PC-9 (cell line): ENCODE measurements at regions of chr6 and their contacts with region 1.

Region 1: DNA sequence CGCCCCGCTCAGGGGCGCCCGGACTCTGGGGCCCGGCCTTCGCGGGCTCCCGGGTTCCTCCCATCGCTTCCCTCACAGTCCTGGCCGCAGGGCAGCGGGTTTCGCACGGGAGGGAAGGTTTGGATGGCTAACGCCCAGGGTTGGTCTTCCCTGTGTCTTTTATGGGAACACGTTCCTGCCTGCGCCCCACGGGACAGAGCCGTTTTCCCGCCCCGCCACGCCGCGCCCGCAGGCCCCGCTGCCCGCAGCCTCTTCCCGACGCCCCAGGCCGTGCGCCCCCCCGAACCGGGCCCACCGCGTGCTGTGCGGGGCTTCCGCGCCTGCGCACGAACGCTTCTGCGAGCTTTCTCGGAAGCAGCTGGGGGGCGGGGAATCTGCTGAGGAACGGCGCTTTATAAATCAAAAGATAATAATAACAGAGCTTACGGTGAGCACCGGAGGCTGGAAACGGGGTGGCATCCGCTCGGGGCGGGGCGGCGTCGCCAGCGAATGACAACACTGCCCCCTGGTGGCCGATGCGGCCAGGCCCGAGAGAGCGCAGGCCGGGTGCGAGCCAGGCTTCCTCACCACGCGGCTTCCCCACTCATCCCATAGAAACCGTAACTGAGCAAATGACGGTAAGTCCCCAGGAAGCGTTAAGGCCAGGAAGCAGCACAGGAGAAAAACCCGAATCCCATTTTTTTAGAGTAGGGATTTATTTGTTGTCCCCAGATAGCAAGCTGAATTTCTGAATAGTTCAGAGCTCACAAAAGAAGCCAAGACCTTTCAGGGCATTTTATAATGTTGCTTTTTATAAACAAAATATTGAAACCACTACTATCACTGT is 116.4 kb downstream of the MYLK4 start:
- DNase-seq: peak; percentile 37 to 83
- H3K4me3 ChIP-seq: peak overlapping the region; percentile 33; the same call in 1 of the 2 replicates
- H3K27ac ChIP-seq: no peak overlapping the region
- H3K4me1 ChIP-seq: peaks cover 25% of the 10 kb centered on the region
- H3K27me3 ChIP-seq: no peaks in the 10 kb centered on the region
- CTCF ChIP-seq: peak; percentile 90

Region 2: GRCh38 chr6:1609648-1610496 is 1024.5 kb before region 1 on chr6 and contains the start of gene FOXC1:
- CTCF ChIA-PET with region 1: no interaction called
- POLR2A ChIA-PET with region 1: no interaction called
- intact Hi-C with region 1: loop called (anchors 2 kb)
- DNase-seq: peak; percentile 81 to 96
- H3K4me3 ChIP-seq: peak within 1 kb of the TSS; percentile 89
- H3K27ac ChIP-seq: peak within 1 kb of the TSS; percentile 54
- H3K4me1 ChIP-seq: no peaks in the 10 kb centered on the region; the same call in 1 of the 2 replicates
- H3K27me3 ChIP-seq: no peaks in the 10 kb centered on the region
- CTCF ChIP-seq: no peak
- total RNA-seq, gene FOXC1: 16.2 and 18.6 TPM in 2 replicates

Region 3: DNA sequence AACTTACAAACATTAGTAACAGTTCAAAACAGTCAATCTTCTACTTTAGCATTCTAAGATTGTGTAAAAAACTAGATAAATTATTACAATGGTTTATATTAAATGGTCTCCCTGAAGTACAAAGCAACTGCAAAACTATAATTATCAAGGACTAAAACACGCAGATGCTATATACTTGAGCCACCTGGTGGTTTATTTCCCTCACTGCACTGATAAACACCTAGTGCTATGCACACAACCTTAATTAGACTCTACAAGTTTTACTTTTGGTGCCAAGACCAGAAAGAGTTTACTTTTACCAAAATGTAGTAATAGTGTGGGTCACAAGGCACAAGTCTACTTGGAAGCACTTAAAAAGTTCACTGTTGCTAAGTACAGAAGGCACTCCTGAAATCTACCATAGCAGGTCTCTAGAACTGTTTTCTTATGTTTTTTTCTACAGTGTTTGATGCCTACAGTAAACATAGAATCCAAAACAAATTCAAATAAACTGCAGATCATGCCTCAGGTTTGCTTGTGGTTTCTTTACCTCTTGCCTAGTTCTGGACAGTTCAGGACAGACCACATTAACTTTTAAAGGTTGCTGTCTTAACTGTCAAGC is 438.2 kb before region 1 on chr6:
- CTCF ChIA-PET with region 1: no interaction called
- POLR2A ChIA-PET with region 1: no interaction called
- intact Hi-C with region 1: loop called (anchors 5 kb)
- DNase-seq: peak in 1 of 2 experiments; percentile 17
- H3K4me3 ChIP-seq: no peak overlapping the region
- H3K27ac ChIP-seq: no peak overlapping the region
- H3K4me1 ChIP-seq: peaks cover 9% of the 10 kb centered on the region; the same call in 1 of the 2 replicates
- H3K27me3 ChIP-seq: no peaks in the 10 kb centered on the region
- CTCF ChIP-seq: peak; percentile 73

Region 4: DNA sequence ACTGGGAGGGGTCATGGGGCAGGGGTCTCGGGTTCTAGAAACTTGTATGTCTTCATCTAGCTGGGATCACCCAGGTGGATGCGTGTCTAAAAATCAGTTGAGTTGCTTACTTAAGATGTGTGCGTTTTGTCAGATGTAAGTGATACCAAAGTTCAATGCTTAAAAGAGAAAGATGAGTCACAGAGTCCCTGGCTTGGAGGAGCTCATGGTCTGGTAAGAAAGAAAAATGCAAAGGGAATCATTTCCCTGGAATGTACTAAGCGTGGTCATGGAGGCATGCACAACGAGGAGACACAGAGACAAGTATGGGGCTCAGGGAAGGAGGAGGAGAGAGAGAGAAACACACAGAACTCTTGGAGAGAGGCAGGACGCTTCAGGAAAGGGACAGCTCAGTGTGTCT is 202.1 kb before region 1 on chr6:
- CTCF ChIA-PET with region 1: no interaction called
- POLR2A ChIA-PET with region 1: no interaction called
- intact Hi-C with region 1: loop called (anchors 1 kb)
- DNase-seq: peak; percentile 50 to 84
- H3K4me3 ChIP-seq: no peak overlapping the region
- H3K27ac ChIP-seq: peak overlapping the region; percentile 94
- H3K4me1 ChIP-seq: peaks cover 37% of the 10 kb centered on the region
- H3K27me3 ChIP-seq: no peaks in the 10 kb centered on the region
- CTCF ChIP-seq: no peak

Region 5: DNA sequence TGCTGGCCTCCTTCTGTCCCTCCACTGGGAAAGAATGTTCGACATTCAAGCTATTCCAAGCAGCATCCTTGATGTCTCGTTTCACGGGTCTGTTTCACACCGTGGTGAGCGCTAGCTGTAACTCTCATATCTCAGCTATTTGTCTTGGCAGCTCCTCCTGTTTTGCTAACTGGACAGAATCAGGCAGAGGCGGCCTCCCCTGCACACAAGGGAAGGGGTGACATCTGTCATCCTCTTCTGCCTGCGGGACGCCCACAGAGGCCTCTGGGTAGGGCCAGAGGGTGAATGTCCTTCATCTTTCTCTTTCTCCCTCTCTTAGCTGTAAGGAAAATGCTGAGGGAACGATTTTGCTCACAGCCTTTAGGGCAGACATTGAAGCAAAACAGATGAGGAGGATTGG is 156.2 kb before region 1 on chr6:
- CTCF ChIA-PET with region 1: interaction called, 5 read pairs
- POLR2A ChIA-PET with region 1: no interaction called
- intact Hi-C with region 1: loop called (anchors 2 kb)
- DNase-seq: no peak
- H3K4me3 ChIP-seq: no peak overlapping the region
- H3K27ac ChIP-seq: no peak overlapping the region
- H3K4me1 ChIP-seq: peaks cover 11% of the 10 kb centered on the region
- H3K27me3 ChIP-seq: no peaks in the 10 kb centered on the region
- CTCF ChIP-seq: no peak

Region 6: DNA sequence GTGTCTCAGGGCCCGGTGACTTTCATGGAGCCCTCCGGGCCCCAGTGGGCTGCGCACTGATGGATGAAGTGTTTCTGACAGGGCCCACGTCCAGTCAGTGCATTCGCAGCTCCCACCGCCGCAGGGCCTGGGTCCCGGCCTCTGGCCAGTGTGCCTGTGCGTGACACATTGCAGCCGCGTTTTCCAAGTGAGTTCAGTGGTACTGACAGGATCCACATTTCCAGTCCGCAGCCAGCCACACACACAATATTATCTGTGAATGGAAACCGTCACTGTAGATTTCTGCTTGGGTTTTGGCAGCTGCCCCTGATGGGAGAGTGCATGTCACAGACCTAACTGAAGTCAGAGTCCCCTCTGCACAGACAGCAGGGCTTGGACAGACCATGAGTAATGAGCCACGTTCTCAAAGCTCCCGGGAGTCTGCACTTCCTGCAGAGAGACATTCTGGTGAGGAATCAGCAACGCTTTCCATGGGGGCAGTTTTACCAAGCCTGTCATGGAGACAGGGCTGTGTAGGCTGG is 55.1 kb before region 1 on chr6:
- CTCF ChIA-PET with region 1: no interaction called
- POLR2A ChIA-PET with region 1: no interaction called
- intact Hi-C with region 1: loop called (anchors 2 kb)
- DNase-seq: no peak
- H3K4me3 ChIP-seq: no peak overlapping the region
- H3K27ac ChIP-seq: peak overlapping the region; percentile 83
- H3K4me1 ChIP-seq: peaks cover 20% of the 10 kb centered on the region
- H3K27me3 ChIP-seq: no peaks in the 10 kb centered on the region
- CTCF ChIP-seq: no peak